ENCODE measurements at regions of chr5 and their contacts with region 1.

Region 1: GRCh38 chr5:32572778-32573480 is 12.4 kb upstream of the SUB1 start:
- DNase-seq: peak; percentile 85
- H3K4me3 ChIP-seq: no peak overlapping the region
- H3K27ac ChIP-seq: no peak overlapping the region
- H3K4me1 ChIP-seq: peaks cover 18% of the 10 kb centered on the region
- CTCF ChIP-seq: no peak

Region 2: GRCh38 chr5:32538031-32538547 is 34.8 kb before region 1 on chr5:
- CTCF ChIA-PET with region 1: no interaction called
- POLR2A ChIA-PET with region 1: interaction called, 7 read pairs
- intact Hi-C with region 1: loop called (anchors 1 kb)
- DNase-seq: peak; percentile 76
- H3K4me3 ChIP-seq: no peak overlapping the region
- H3K27ac ChIP-seq: peak overlapping the region; percentile 15
- H3K4me1 ChIP-seq: peaks cover 44% of the 10 kb centered on the region
- CTCF ChIP-seq: no peak

Region 3: DNA sequence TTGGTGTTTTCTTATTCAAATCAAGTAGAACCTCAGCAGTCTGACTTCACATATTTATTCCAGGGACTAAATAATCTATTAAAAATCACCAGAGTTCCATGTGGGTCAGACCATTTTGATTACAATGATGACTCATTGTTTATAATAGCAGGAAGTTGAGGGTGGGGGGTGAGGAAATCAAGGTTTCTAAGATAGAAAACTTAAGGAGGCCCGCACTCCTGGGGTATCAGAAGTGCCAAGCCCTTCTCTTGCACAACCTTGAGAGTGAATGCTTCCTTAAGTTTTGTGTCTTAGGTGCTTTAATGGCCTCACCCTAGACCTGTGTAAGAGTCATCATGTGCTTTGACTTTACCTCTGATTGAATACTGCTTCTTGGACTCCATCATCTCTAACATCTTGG is 106.3 kb after region 1 on chr5:
- CTCF ChIA-PET with region 1: no interaction called
- POLR2A ChIA-PET with region 1: no interaction called
- intact Hi-C with region 1: no loop called
- DNase-seq: no peak
- H3K4me3 ChIP-seq: no peak overlapping the region
- H3K27ac ChIP-seq: no peak overlapping the region
- H3K4me1 ChIP-seq: no peaks in the 10 kb centered on the region
- CTCF ChIP-seq: no peak

Region 4: GRCh38 chr5:32767948-32768427 is 195.1 kb after region 1 on chr5:
- CTCF ChIA-PET with region 1: no interaction called
- POLR2A ChIA-PET with region 1: no interaction called
- intact Hi-C with region 1: no loop called
- DNase-seq: no peak
- H3K4me3 ChIP-seq: no peak overlapping the region
- H3K27ac ChIP-seq: no peak overlapping the region
- H3K4me1 ChIP-seq: no peaks in the 10 kb centered on the region
- CTCF ChIP-seq: no peak